ENCODE measurements at regions of chr20 and their contacts with region 1.

Region 1: DNA sequence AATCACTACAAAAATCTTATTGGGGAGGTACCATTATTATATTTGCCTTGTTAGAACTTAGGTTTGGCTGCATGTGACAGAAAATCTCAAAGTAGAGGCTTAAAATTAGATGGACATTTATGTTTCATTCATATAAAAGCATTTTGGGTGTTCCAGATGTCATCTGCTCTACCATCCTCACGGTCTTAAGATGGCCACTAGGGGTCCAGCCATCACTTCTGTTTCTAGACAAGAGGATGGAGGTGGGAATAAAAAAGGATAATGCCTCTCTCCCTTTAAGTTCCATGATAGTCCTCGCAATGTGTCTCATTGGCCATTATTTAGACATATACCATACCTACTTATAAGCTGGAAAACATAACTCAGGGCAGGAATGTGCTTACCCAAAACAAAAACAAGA is 929.5 kb downstream of the KIF16B start:
- DNase-seq: no peak
- H3K4me3 ChIP-seq: no peak overlapping the region
- H3K27ac ChIP-seq: no peak overlapping the region
- H3K4me1 ChIP-seq: no peaks in the 10 kb centered on the region
- H3K27me3 ChIP-seq: no peaks in the 10 kb centered on the region
- CTCF ChIP-seq: peak; percentile 47; the same call in 1 of the 2 replicates

Region 2: DNA sequence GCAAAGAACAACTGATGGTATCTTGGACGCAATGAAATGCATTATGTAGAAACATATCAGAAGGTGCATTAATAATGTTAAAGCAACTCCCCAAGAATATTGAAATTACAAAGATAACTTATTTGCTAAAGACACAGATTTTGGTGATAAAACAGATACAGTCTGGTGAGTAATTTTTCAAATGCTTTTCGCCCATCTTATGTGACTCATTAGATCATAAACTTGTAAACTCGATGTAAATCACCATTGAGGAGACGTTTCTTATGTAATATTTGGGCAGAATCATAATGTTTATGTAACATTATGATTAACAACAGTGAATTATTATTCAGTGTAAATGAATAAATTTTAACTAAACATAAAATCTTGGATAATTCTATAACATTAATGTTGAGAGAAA is 321.5 kb after region 1 on chr20:
- CTCF ChIA-PET with region 1: no interaction called
- POLR2A ChIA-PET with region 1: no interaction called
- intact Hi-C with region 1: no loop called
- DNase-seq: no peak
- H3K4me3 ChIP-seq: no peak overlapping the region
- H3K27ac ChIP-seq: no peak overlapping the region
- H3K4me1 ChIP-seq: no peaks in the 10 kb centered on the region
- H3K27me3 ChIP-seq: no peaks in the 10 kb centered on the region
- CTCF ChIP-seq: no peak

Region 3: DNA sequence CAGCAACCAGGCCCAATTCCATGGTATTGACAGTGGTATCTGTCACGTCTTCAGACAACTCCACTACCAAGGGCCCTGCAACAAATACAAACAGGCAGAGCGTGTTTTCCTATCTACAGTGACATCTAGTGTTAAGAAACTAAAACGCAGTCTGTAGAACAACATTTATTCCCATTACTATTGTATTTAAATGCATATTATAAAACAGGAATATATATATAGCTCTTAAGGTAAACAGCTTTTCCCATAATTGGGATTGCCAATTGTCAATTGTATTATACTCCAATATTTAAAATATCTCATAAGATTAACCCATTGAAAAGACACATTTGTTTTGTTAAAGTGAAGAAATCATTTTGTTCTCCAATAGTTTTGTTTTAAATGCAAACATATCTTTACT is 832.3 kb after region 1 on chr20:
- CTCF ChIA-PET with region 1: no interaction called
- POLR2A ChIA-PET with region 1: no interaction called
- intact Hi-C with region 1: loop called (anchors 5 kb)
- DNase-seq: peak; percentile 7 to 67
- H3K4me3 ChIP-seq: no peak overlapping the region
- H3K27ac ChIP-seq: no peak overlapping the region
- H3K4me1 ChIP-seq: peaks cover 46% of the 10 kb centered on the region
- H3K27me3 ChIP-seq: no peaks in the 10 kb centered on the region
- CTCF ChIP-seq: peak; percentile 90

Measured in PC-9 (cell line).